Activated CD4-positive, alpha-beta memory T cell treated with anti-CD3 and anti-CD28 coated beads, Interleukin-2, amount 10 ng/mL, durations not matched to agents 7 days and 5 days (primary cell): ENCODE measurements at regions of chr17 and their contacts with region 1.

Region 1: DNA sequence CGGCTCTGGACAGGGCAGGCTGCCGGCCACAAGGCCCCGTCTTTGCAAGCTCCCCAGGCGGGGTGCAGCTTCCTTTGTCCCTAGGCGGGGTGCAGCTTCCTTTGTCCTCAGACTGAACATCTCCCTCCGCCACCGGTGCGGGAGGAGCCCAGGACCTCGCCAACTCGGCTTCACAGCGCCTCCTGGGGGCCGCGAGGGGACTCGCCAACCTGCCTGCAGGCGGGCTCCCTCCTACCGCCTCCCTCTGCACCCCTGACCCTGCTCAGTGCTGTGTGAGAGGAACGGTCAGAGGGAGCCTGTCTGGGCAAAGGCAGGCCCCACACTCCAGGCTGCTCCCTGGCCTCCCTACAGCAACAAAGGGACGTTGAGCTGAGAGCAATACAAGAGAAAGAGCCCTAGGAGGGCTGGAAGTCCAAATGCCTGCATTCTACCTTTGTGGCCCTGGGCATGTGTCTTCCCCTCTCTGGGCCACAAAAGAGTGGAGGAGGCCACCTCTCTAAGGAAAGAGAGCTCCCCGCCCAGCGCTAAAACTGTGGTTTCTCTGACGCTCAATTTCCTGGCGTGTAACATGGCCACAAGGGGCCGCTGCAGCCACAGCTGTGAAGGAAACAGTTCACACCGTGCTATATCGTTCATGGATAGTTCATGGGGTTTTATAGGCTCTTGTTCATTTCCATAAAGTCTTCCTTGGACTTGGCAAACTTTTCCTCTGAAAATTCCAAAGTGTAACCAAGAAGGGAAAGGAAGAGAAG is 20.9 kb upstream of the KRT19 start:
- DNase-seq: peak; percentile 89
- H3K4me3 Mint-ChIP-seq: no peak overlapping the region
- H3K27ac Mint-ChIP-seq: peak overlapping the region; percentile 75
- H3K4me1 Mint-ChIP-seq: peaks cover 21% of the 10 kb centered on the region
- H3K27me3 Mint-ChIP-seq: peaks cover 8% of the 10 kb centered on the region

Region 2: DNA sequence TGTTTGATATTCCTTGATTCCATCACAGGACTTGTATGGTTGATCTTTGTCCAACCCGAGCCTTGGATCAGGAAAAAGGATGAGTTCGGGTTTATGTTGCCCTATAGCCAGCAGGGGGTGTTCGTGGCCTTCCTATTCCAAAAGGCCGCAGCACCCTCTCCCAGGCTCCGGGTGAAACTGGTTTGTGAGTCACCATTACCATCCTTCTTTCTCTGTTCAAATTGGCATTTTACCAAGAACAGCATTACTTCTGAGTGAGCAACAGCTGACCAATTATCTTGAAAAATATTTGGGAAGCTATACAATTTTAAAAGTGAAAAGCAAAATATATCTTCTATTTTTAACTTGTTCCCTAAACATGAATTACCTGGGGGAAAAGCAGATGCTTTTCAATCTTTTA is 639.7 kb before region 1 on chr17:
- CTCF ChIA-PET with region 1: interaction called, 17 read pairs
- POLR2A ChIA-PET with region 1: no interaction called
- DNase-seq: peak; percentile 53
- H3K4me3 Mint-ChIP-seq: no peak overlapping the region
- H3K27ac Mint-ChIP-seq: no peak overlapping the region
- H3K4me1 Mint-ChIP-seq: no peaks in the 10 kb centered on the region
- H3K27me3 Mint-ChIP-seq: peaks cover 33% of the 10 kb centered on the region

Region 3: GRCh38 chr17:41535764-41536481 is 13.1 kb before region 1 on chr17:
- CTCF ChIA-PET with region 1: interaction called, 18 read pairs
- POLR2A ChIA-PET with region 1: interaction called, 4 read pairs
- DNase-seq: no peak
- H3K4me3 Mint-ChIP-seq: no peak overlapping the region
- H3K27ac Mint-ChIP-seq: no peak overlapping the region
- H3K4me1 Mint-ChIP-seq: no peaks in the 10 kb centered on the region
- H3K27me3 Mint-ChIP-seq: peaks cover 31% of the 10 kb centered on the region

Region 4: GRCh38 chr17:41567317-41567716 is 18.3 kb after region 1 on chr17:
- CTCF ChIA-PET with region 1: interaction called, 21 read pairs
- POLR2A ChIA-PET with region 1: no interaction called
- DNase-seq: no peak
- H3K4me3 Mint-ChIP-seq: no peak overlapping the region
- H3K27ac Mint-ChIP-seq: peak overlapping the region; percentile 75
- H3K4me1 Mint-ChIP-seq: peaks cover 6% of the 10 kb centered on the region
- H3K27me3 Mint-ChIP-seq: peaks cover 39% of the 10 kb centered on the region

Region 5: DNA sequence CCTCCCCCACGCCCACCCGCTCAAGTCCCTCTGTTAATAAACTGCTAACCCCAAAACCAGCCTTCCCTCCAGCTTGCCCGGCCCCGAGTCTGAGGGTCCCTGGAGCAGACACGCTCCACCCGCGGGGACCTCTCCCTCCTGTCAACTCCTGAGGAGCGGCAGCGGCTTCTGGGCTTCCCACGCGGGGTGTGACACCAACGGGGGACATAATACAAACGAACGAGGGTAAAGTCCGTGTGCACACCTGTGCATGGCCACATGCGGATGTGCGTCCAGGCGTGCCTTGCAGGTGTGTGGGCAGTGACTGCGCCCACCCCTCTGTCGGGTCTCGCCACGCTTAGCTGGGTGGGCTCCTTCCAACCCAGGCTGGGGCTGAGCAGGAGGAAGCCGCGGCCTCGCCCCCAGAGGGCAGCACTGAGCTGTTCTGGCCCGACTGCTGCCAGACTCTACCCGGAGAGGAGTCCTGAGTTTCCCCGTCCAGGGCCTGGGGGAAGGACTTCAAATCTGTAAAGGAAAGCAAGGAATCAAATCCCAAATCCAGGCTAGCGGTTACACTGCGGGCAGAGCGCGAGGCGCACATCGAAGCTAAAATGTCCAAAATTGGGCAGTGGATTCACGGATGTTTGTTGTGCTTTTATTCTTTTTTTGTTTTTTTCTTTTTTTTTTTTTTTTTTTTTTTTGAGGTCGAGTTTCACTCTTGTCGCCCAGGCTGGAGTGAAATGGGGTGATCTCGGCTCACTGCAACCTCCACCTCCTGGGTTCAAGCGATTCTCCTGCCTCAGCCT is 99.6 kb after region 1 on chr17:
- CTCF ChIA-PET with region 1: interaction called, 53 read pairs
- POLR2A ChIA-PET with region 1: interaction called, 4 read pairs
- DNase-seq: peak; percentile 85
- H3K4me3 Mint-ChIP-seq: peak overlapping the region; percentile 52
- H3K27ac Mint-ChIP-seq: peak overlapping the region; percentile 9
- H3K4me1 Mint-ChIP-seq: peaks cover 11% of the 10 kb centered on the region
- H3K27me3 Mint-ChIP-seq: peaks cover 8% of the 10 kb centered on the region

Region 6: GRCh38 chr17:41688699-41689496 is 139.9 kb after region 1 on chr17 and contains the start of gene EIF1:
- CTCF ChIA-PET with region 1: interaction called, 14 read pairs
- POLR2A ChIA-PET with region 1: interaction called, 13 read pairs
- DNase-seq: peak; percentile 100
- H3K4me3 Mint-ChIP-seq: peak within 1 kb of the TSS; percentile 88
- H3K27ac Mint-ChIP-seq: peak within 1 kb of the TSS; percentile 98
- H3K4me1 Mint-ChIP-seq: peaks cover 39% of the 10 kb centered on the region
- H3K27me3 Mint-ChIP-seq: no peaks in the 10 kb centered on the region
- total RNA-seq, gene EIF1: 933 to 950 TPM